ENCODE measurements at regions of chr19 and their contacts with region 1.

Region 1: DNA sequence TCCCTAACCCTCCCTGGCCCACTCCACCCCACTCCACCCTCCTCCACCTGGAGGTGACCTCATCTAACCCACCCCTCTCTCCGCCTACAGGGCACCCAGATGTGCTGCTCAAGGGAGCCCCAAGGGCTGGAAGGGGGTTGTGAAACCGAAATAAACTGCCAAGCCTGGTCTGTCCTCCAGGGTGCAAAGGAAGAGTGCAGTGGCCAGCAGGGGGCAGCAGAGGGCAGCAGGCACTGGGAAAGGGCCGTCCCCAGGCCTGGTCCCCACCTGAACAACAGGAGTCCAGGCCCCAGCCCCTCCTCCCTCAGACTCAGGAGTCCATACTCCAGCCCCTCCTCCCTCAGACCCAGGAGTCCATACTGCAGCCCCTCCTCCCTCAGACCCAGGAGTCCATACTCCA is 8.4 kb upstream of the BCAM start:
- DNase-seq: peak; percentile 77 to 87
- H3K4me3 ChIP-seq: no peak overlapping the region
- H3K27ac ChIP-seq: no peak overlapping the region
- H3K4me1 ChIP-seq: peaks cover 0 to 15% (median 2%) of the 10 kb centered on the region in 4 donors
- H3K27me3 ChIP-seq: no peaks in the 10 kb centered on the region
- CTCF ChIP-seq: peak; percentile 96

Region 2: DNA sequence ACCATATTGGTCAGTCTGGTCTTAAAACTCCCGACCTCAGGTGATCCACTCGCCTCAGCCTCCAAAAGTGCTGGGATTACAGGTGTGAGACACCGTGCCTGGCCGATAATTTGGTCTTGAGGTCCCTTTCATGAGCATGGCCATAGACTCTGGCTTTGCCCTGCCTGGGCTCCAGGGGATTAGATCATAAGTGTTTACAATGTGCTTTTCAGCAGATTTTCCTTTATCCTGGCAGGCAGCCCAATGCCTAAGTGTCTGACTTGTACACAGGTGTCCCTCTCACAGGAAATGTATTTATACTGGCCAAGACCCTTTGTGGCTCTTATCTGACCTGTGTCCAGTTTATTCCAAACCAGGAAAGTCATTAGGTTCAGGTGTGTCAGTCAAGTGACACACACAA is 24.3 kb after region 1 on chr19:
- intact Hi-C with region 1: no loop called
- DNase-seq: no peak
- H3K4me3 ChIP-seq: no peak overlapping the region
- H3K27ac ChIP-seq: no peak overlapping the region
- H3K4me1 ChIP-seq: peaks cover 0 to 37% (median 23%) of the 10 kb centered on the region in 4 donors
- H3K27me3 ChIP-seq: no peaks in the 10 kb centered on the region
- CTCF ChIP-seq: no peak

Region 3: GRCh38 chr19:44845612-44846454 is 45.4 kb after region 1 on chr19 and contains the start of gene NECTIN2:
- intact Hi-C with region 1: loop called (anchors 1 kb)
- DNase-seq: peak; percentile 100
- H3K4me3 ChIP-seq: peak within 1 kb of the TSS; percentile 90 to 94
- H3K27ac ChIP-seq: peak within 1 kb of the TSS; percentile 91 to 93
- H3K4me1 ChIP-seq: peaks cover 0 to 42% (median 33%) of the 10 kb centered on the region in 4 donors
- H3K27me3 ChIP-seq: no peaks in the 10 kb centered on the region
- CTCF ChIP-seq: peak; percentile 61 to 79

Measured in tibial artery (tissue), 4 donors.